ENCODE measurements at regions of chr20 and their contacts with region 1.

Region 1: DNA sequence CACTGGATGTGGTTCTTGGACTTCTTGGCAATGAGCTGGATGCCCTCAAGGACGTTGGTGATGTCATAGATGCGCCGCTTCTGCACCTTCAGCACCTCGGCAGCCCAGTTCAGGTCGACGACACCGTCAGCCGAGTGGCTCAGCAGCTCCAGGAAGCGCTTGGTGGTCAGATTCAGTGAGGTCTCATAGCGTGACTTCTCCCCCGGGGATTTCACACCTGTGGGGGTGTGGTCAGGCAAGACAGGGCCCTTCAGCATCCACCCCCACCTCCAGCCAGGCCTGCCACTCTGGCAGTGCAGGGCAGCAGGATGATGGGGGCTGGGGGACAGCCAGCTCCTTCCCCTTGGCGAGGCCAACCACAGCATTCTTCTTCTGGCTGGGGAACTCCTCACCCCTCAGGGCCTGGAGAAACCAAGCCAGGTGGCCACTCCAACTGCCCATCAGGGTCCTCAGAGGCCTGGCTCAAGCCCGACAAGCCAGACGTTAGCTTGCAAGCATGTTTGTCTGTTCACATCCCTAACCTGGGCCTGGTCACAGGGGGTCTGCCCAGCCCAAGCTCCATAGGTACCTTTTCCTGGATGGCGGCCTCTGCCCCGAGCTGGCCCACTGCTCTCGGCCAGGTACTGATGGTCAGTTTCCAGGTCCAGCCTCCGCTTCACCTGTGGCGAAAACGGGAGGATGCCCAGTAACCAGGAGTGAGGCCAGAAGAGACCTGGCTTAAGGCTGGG is 5.7 kb upstream of the NECAB3 start:
- DNase-seq: peak in 1 of 7 donors; percentile 42
- H3K4me3 ChIP-seq: no peak overlapping the region
- H3K27ac ChIP-seq: no peak overlapping the region
- H3K4me1 ChIP-seq: peaks cover 12 to 16% of the 10 kb centered on the region in 2 donors
- H3K27me3 ChIP-seq: no peaks in the 10 kb centered on the region
- CTCF ChIP-seq: no peak
- POLR2A ChIP-seq: no peak

Region 2: GRCh38 chr20:33589059-33589458 is 90.9 kb before region 1 on chr20:
- intact Hi-C with region 1: no loop called
- DNase-seq: no peak
- H3K4me3 ChIP-seq: no peak overlapping the region
- H3K27ac ChIP-seq: no peak overlapping the region
- H3K4me1 ChIP-seq: no peaks in the 10 kb centered on the region
- H3K27me3 ChIP-seq: no peaks in the 10 kb centered on the region
- CTCF ChIP-seq: no peak
- POLR2A ChIP-seq: no peak

Region 3: GRCh38 chr20:33719989-33720709 is 40.2 kb after region 1 on chr20 and contains the start of gene PXMP4:
- intact Hi-C with region 1: loop called in 1 of 2 experiments (anchors 5 kb)
- DNase-seq: peak; percentile 91 to 99 (median 94)
- H3K4me3 ChIP-seq: peak within 1 kb of the TSS; percentile 22 to 98 (median 54)
- H3K27ac ChIP-seq: peak within 1 kb of the TSS; percentile 9 to 84 (median 69)
- H3K4me1 ChIP-seq: peaks cover 8 to 28% of the 10 kb centered on the region in 2 donors
- H3K27me3 ChIP-seq: no peaks in the 10 kb centered on the region
- CTCF ChIP-seq: no peak
- POLR2A ChIP-seq: peak in 1 of 2 donors; percentile 70
- total RNA-seq, gene PXMP4: 11.9 to 47.4 (median 23.7) TPM

Measured in adrenal gland (tissue), 19 donors.